ENCODE measurements at regions of chr5 and their contacts with region 1.

Region 1: GRCh38 chr5:140145818-140146522 is 20.2 kb downstream of the IGIP start:
- DNase-seq: no peak
- H3K4me3 ChIP-seq: peak overlapping the region; percentile 48
- CTCF ChIP-seq: peak; percentile 69

Region 2: DNA sequence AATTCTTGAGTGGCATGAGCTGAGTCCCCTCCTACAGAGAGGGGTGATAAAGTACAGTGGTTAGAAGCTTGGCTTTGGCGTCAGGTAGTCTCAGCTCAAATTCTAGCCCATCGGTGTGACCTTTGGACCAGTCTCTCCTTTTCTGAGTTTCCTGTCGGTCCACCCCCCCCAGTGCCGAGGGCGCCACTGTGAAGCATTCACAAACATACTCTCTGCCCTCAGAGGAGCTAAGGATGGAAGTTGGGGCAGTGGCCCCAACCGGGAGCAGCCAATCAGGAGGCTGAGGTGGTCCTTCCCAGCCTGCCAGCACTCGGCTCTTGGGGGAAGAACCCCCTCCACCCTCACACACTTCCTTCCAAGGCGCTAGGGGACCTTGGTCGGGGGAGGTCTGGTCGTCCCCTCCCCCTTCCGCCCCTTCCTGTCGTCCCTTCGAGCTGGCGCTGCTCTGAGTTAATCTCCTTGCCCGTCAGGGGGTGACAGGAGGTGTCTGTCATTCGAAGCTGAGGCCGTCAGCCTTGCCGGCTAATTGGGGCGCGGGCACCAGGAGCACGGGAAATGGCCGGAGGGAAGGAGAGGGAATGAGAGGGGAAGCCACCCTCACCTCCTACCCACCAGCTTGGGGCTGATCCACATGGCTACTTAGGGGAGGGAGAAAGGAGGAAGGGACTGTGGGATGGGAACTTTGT is 444.8 kb before region 1 on chr5:
- CTCF ChIA-PET with region 1: no interaction called
- POLR2A ChIA-PET with region 1: no interaction called
- DNase-seq: no peak
- H3K4me3 ChIP-seq: no peak overlapping the region
- CTCF ChIP-seq: no peak

Region 3: DNA sequence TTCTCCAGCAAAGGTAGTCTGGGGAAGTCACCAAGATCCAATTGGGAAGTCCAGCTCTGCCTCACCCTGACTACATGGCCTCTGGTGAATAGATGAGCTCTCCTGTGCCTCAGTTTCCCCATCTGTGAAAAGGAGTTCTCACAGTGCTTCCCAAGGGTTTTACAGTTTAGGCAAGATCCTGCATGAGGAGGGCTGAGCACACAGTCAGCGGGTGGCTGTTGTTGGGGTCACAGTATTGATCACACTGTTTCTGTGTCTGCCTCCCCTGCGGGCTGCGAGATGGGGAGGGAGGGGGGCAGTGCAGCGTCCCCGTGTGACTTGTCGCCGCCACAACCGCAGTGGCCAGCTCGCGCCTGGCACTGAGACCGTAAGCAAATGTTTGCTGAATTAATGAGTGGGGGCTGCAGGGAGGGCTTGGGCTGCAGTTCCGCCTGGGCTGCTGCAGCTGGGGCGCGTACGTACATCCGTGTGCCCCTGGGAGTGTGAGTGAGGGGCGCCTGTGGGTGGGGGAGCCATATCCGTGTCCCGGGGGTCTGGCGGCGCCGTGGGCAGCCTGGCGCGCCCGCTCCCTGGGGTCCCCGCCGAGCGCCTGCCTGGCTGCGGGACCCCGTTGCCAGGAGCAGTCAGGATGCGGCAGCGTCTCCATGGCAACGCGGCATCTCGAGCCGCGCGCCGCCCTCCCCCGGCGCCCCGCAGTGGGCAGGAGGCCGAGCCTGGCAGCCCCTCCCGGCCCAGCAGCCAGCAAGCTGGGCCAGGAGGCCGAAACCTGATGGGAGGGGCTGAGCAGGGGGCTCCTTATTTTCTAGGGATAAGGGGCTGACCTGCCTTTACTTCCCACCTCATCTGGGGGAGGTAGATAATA is 381.8 kb before region 1 on chr5:
- CTCF ChIA-PET with region 1: no interaction called
- POLR2A ChIA-PET with region 1: no interaction called
- DNase-seq: no peak
- H3K4me3 ChIP-seq: no peak overlapping the region
- CTCF ChIP-seq: no peak

Region 4: DNA sequence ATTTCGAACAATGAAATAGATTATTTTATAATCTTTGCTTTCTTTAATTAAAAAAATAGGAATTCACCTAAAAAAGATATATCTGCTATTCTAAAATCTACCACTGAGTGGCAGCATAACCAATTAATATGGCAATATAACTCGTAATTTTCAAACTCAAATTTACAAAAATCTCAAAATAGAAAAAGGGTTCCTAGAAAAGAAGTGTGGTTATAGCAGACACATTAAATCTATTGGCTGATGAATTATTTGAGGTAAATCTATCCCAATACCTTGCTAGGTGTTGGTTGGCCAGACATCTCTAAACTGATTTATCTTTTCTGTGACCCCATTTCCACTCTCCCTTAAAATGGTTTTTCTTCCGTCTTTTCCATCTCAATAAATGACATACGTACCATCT is 72.7 kb before region 1 on chr5:
- CTCF ChIA-PET with region 1: interaction called, 288 read pairs
- POLR2A ChIA-PET with region 1: no interaction called
- DNase-seq: no peak
- H3K4me3 ChIP-seq: no peak overlapping the region
- CTCF ChIP-seq: no peak

Region 5: DNA sequence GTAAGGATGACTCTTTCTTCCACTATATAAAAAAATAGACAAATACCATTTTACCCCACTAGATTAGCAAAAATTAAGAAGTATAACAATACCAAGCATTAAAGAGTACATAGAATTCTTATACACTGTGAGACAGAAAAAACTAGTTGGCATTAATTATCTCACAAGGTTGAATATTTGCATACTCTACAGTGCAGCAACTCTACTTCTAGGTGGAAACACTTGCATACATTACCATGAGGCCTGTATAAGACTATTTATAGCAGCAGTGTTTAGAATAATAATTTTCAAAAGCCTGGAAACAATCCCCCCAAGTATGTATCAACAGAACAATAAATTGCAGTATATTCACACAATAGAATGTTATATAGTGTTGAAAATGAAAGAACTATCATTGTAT is 51.1 kb before region 1 on chr5:
- CTCF ChIA-PET with region 1: interaction called, 20 read pairs
- POLR2A ChIA-PET with region 1: no interaction called
- DNase-seq: no peak
- H3K4me3 ChIP-seq: no peak overlapping the region
- CTCF ChIP-seq: no peak

Region 6: DNA sequence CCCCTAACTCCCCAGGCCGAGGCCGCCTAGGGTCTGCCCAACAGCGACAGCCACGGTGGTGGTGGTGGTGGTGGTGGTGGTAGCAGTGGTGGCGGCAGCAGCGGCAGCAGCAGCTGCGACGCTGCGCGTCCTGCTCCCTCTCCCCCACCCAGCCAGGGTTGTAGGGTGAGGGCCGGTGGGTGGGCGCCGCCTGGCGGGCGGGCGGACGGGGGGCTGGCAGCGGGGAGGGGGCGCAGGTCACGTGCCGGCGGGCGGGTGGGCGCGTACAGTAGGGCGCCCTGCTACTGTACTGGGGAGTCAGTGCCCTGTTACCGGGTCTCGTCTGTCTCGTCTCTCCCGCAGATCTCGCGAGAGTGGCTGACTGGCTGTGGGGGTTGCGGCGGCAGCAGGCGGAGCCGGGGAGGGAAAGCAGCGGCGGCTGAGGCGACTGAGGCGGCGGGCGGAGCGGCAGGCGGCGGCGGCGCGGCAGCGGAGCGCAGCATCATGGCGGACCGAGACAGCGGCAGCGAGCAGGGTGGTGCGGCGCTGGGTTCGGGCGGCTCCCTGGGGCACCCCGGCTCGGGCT is 32.2 kb before region 1 on chr5 and contains the start of gene PURA:
- CTCF ChIA-PET with region 1: interaction called, 336 read pairs
- POLR2A ChIA-PET with region 1: no interaction called
- DNase-seq: no peak
- H3K4me3 ChIP-seq: peak within 1 kb of the TSS; percentile 74
- CTCF ChIP-seq: no peak

Region 7: GRCh38 chr5:140131967-140132409 is 14.0 kb before region 1 on chr5:
- CTCF ChIA-PET with region 1: interaction called, 180 read pairs
- POLR2A ChIA-PET with region 1: no interaction called
- DNase-seq: peak; percentile 80
- H3K4me3 ChIP-seq: no peak overlapping the region
- CTCF ChIP-seq: no peak

Region 8: GRCh38 chr5:140169410-140169809 is 23.4 kb after region 1 on chr5:
- CTCF ChIA-PET with region 1: interaction called, 22 read pairs
- POLR2A ChIA-PET with region 1: no interaction called
- DNase-seq: no peak
- H3K4me3 ChIP-seq: no peak overlapping the region
- CTCF ChIP-seq: no peak

Region 9: DNA sequence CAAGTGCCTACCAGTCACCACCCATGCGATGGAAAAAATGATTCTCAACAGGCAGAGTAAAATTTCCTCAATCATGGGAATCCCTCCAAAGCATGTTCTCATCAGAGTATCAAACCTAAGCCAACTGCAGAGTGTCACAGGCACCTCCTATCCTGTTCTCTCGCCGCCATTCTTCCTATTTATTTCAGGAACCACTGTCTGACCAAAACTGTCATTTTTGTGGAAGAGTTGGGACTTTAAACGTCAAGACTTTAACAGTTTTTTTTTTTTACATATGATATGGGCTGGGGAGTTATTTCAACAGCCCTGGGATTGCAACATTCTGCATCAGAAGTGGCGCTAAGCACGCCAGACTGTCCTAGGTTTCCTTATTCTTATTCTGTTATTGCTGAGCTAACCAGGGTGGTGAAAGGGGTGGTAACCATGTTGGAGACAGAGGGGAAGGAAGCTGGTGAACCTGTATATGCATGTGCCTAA is 127.5 kb after region 1 on chr5:
- CTCF ChIA-PET with region 1: no interaction called
- POLR2A ChIA-PET with region 1: no interaction called
- DNase-seq: no peak
- H3K4me3 ChIP-seq: no peak overlapping the region
- CTCF ChIP-seq: no peak

Region 10: DNA sequence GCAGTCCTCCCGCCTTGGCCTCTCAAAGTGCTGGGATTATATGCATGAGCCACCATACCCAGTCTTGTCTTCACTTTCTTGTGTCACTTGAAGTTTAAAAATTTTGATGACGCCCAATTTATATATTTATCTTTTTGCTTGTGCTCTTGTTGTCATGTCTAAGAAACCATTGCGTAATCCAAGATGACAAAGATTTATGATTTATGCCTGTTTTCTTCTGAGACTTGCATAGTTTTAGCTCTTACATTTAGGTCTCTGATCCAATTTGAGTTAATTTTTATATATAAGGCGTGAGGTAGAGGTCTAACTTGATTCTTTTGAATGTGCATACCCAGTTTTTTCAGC is 274.2 kb after region 1 on chr5:
- CTCF ChIA-PET with region 1: no interaction called
- POLR2A ChIA-PET with region 1: no interaction called
- DNase-seq: no peak
- H3K4me3 ChIP-seq: no peak overlapping the region
- CTCF ChIP-seq: no peak

Measured in AG04449 (cell line).